GM12878 (cell line): ENCODE measurements at regions of chr16 and their contacts with region 1.

Region 1: DNA sequence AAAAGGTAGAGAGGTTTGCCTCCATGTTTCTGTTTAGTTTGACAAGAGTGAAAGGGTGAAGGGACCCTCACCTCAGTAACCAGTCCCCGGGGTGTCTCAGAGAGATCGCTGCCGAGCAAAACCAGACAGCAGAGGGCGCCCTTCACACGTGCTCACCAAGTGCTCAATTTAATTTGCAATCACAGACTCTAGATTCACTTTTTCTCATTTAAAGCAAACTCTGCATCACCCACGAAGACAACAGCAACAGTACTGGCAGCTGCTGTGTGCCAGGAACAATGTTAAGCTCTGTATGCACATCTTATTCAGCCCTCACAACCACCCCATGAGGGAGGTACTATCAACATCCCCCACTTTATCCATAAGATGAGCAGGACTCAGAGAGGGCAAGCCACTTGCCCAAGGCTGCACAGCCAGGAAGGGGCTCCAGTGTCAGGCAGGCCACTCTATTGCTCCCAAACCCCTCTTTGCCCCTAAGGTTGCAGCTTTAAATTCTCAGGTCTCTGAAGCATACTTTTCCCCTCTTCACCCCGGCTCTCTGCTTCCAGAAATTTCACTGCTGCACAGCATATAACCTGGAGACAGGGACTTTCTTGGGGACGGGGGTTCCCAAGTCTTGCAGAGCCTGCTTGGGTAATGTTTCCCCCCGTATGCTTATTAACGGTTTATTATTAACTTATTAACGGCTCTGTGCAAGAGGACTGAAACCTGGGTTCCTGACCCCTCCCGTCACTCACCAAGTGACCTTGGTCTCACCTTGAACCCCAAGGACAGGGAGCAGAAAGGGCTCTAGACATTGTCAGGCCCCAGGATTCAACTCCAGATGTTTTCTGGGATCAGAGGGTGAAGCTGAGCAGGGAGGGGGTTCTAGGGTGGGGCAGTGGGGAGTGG is 70.9 kb downstream of the CNGB1 start:
- DNase-seq: no peak
- ATAC-seq: peak; percentile 88
- H3K4me3 ChIP-seq: no peak overlapping the region
- H3K27ac ChIP-seq: no peak overlapping the region
- H3K4me1 ChIP-seq: no peaks in the 10 kb centered on the region
- H3K27me3 ChIP-seq: peaks cover 0 to 1% of the 10 kb centered on the region in 2 experiments; a peak in 1 of 4 replicates
- CTCF ChIP-seq: peak; percentile 84 to 88 (median 87)
- EP300 ChIP-seq: no peak
- POLR2A ChIP-seq: no peak
- RAD21 ChIP-seq: peak; percentile 75

Region 2: DNA sequence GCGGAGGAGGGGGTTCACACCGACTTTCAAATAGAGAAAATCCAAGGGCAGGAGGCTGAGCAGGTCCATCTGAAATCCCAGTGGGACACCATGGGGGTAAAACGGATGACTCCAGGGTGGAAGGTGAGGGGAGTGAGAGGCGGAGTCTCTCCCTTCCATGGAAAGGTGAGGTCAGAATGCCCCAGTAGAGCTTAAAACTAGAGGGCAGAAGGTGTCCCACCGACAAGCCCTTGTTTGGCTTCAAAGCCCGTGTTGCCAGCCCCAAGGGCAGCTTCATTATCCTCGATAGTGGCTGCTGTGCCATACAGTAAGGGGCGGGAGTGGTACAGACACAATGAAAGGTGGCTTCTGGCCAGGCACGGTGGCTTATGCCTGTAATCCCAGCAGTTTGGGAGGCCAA is 15.3 kb after region 1 on chr16:
- CTCF ChIA-PET with region 1: no interaction called
- POLR2A ChIA-PET with region 1: no interaction called
- RAD21 ChIA-PET with region 1: no interaction called
- SMC1A ChIA-PET with region 1: no interaction called
- in situ Hi-C with region 1: no loop called
- intact Hi-C with region 1: no loop called
- DNase-seq: no peak
- ATAC-seq: no peak
- H3K4me3 ChIP-seq: no peak overlapping the region
- H3K27ac ChIP-seq: no peak overlapping the region
- H3K4me1 ChIP-seq: no peaks in the 10 kb centered on the region
- H3K27me3 ChIP-seq: peaks cover 0 to 2% of the 10 kb centered on the region in 2 experiments; a peak in 1 of 4 replicates
- CTCF ChIP-seq: no peak
- EP300 ChIP-seq: no peak
- POLR2A ChIP-seq: no peak
- RAD21 ChIP-seq: no peak

Region 3: DNA sequence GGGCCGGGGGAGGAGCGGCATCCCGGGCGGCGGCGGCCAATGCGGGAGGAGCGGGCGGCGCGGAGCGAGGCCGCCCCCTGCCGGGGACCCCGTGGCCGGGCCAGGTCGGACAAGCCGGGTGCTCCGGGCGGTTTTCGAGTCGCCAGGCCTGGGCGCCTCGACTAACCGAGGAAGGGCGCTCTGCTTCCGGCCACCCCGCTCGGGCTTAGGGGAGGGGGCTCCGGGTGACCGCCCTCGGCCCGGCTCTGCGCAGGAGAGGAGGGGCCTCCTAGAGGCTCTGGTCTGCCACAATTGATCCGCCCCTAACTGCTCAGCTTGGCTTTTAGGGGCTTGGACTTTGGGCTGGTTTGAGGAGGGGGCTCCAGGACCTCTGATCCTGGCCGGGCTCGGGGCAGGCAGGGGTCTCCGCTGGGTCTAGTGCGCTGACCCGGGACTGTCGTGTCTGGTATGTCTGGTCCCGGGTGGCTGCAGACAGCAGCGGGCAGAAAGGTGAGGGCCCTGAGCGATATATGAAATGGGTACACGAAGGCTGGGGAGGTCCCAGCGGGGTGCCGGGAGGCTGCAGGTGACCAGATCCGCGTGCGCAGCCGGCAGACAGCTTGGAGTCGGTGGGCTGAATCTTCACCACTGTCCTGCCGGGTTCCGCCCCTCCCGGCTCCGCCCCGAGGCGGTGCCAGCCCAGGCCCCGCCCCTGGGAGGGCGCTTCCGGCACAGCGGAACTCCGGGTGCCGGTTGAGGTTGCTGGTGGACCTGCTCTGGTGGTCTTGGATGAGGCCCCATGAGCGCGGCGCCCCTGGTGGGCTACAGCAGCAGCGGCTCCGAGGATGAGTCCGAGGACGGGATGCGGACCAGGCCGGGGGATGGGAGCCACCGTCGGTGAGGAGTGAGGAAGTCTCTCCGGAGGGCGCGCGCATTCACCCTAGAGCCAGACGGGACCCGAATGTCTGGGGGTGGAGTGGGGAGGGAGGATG is 101.0 kb after region 1 on chr16 and contains the start of gene USB1:
- CTCF ChIA-PET with region 1: interaction called, 20 read pairs
- POLR2A ChIA-PET with region 1: no interaction called
- RAD21 ChIA-PET with region 1: interaction called, 4 read pairs
- SMC1A ChIA-PET with region 1: no interaction called
- in situ Hi-C with region 1: loop called (anchors 5 kb)
- intact Hi-C with region 1: loop called (anchors 1 kb)
- DNase-seq: peak; percentile 56
- ATAC-seq: peak; percentile 91
- H3K4me3 ChIP-seq: peak within 1 kb of the TSS; percentile 98
- H3K27ac ChIP-seq: peak within 1 kb of the TSS; percentile 78
- H3K4me1 ChIP-seq: peaks cover 13% of the 10 kb centered on the region
- H3K27me3 ChIP-seq: no peaks in the 10 kb centered on the region
- CTCF ChIP-seq: peak; percentile 42 to 75 (median 57)
- EP300 ChIP-seq: no peak
- POLR2A ChIP-seq: peak; percentile 88
- RAD21 ChIP-seq: peak; percentile 56; the same call in 1 of the 2 replicates
- polyA plus RNA-seq, gene USB1: 7.9 to 8.7 TPM

Region 4: DNA sequence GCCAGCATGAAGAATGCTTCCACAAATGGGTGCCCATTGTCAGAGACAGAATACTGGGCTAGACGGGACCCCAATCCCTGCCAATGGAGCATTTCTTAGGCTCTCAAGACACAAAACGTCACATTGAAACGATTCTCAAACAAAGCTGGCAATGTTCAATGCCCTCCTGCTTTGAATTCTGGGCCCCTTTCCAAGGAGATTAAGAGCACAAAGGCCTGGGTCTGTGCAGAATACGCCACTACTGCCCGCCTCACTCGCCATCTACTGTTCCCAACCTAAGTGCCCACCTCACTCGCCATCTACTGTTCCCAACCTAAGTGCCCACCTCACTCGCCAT is 219.5 kb after region 1 on chr16:
- CTCF ChIA-PET with region 1: interaction called, 21 read pairs
- POLR2A ChIA-PET with region 1: interaction called, 9 read pairs
- RAD21 ChIA-PET with region 1: interaction called, 3 read pairs
- SMC1A ChIA-PET with region 1: interaction called, 5 read pairs
- in situ Hi-C with region 1: no loop called
- intact Hi-C with region 1: loop called (anchors 5 kb)
- DNase-seq: no peak
- ATAC-seq: no peak
- H3K4me3 ChIP-seq: no peak overlapping the region
- H3K27ac ChIP-seq: no peak overlapping the region
- H3K4me1 ChIP-seq: peaks cover 12% of the 10 kb centered on the region
- H3K27me3 ChIP-seq: no peaks in the 10 kb centered on the region
- CTCF ChIP-seq: no peak
- EP300 ChIP-seq: no peak
- POLR2A ChIP-seq: no peak
- RAD21 ChIP-seq: no peak

Region 5: DNA sequence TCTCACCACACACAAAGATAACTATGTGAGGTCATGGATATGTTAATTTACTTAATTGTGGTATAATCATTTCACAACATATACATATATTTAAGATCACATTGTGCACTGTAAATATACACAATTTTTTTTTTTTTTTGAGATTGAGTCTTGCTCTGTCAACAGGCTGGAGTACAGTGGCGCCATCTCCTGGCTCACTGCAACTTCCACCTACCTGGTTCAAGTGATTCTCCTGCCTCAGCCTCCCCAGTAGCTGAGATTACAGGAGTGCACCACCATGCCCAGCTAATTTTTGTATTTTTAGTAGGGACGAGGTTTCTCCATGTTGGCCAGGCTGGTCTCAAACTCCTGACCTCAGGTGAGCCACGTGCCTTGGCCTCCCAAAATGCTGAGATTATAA is 406.3 kb after region 1 on chr16:
- CTCF ChIA-PET with region 1: interaction called, 4 read pairs
- POLR2A ChIA-PET with region 1: no interaction called
- RAD21 ChIA-PET with region 1: no interaction called
- SMC1A ChIA-PET with region 1: no interaction called
- in situ Hi-C with region 1: no loop called
- intact Hi-C with region 1: loop called (anchors 10 kb)
- DNase-seq: no peak
- ATAC-seq: peak; percentile 71
- H3K4me3 ChIP-seq: no peak overlapping the region
- H3K27ac ChIP-seq: no peak overlapping the region
- H3K4me1 ChIP-seq: no peaks in the 10 kb centered on the region
- H3K27me3 ChIP-seq: no peaks in the 10 kb centered on the region
- CTCF ChIP-seq: peak; percentile 46 to 67 (median 54)
- EP300 ChIP-seq: no peak
- POLR2A ChIP-seq: no peak
- RAD21 ChIP-seq: peak; percentile 59

Region 6: DNA sequence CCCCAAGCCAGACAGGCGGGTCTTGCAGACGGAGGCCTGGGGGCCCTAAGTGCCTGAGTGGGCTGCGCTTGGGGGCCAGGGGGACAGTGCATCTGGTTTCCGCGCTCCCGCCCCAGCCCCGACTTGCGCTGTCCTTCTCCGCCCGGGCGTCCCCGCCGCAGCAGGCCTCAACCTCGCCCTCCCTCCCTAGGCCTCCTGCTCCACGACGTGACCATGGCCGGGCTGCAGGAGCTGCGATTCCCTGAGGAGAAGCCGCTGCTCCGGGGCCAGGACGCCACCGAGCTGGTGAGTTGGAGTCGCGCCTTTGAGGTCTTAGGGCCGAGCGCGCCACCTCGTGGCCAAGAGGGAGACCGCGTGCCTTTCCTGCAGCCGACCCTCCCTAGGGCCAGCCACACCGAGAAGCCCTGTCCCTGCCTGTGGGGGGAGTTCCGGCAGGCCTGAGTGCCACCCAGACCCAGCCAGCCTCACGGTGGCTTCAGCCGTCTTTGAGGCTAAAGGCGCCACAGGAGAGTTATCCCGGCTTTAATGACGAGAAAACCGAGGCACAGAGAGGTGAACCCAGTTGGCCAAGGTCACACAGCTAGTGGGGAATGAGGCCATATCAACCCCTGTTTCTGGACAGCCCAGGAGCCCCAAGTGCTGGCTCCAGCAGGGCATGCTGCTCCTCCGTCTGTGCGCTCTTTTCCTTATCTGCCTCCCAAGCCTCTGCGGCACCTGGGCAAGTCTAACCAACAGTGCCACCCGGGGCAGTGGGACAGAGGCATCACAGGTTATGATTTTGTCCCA is 587.7 kb after region 1 on chr16:
- CTCF ChIA-PET with region 1: no interaction called
- POLR2A ChIA-PET with region 1: no interaction called
- RAD21 ChIA-PET with region 1: no interaction called
- SMC1A ChIA-PET with region 1: no interaction called
- in situ Hi-C with region 1: no loop called
- intact Hi-C with region 1: loop called (anchors 5 kb)
- DNase-seq: no peak
- ATAC-seq: peak; percentile 97
- H3K4me3 ChIP-seq: no peak overlapping the region
- H3K27ac ChIP-seq: no peak overlapping the region
- H3K4me1 ChIP-seq: no peaks in the 10 kb centered on the region
- H3K27me3 ChIP-seq: no peaks in the 10 kb centered on the region; a peak in 1 of 4 replicates
- CTCF ChIP-seq: peak; percentile 85 to 92 (median 90)
- EP300 ChIP-seq: no peak
- POLR2A ChIP-seq: no peak
- RAD21 ChIP-seq: peak; percentile 77